ENCODE measurements at regions of chr5 and their contacts with region 1.

Region 1: DNA sequence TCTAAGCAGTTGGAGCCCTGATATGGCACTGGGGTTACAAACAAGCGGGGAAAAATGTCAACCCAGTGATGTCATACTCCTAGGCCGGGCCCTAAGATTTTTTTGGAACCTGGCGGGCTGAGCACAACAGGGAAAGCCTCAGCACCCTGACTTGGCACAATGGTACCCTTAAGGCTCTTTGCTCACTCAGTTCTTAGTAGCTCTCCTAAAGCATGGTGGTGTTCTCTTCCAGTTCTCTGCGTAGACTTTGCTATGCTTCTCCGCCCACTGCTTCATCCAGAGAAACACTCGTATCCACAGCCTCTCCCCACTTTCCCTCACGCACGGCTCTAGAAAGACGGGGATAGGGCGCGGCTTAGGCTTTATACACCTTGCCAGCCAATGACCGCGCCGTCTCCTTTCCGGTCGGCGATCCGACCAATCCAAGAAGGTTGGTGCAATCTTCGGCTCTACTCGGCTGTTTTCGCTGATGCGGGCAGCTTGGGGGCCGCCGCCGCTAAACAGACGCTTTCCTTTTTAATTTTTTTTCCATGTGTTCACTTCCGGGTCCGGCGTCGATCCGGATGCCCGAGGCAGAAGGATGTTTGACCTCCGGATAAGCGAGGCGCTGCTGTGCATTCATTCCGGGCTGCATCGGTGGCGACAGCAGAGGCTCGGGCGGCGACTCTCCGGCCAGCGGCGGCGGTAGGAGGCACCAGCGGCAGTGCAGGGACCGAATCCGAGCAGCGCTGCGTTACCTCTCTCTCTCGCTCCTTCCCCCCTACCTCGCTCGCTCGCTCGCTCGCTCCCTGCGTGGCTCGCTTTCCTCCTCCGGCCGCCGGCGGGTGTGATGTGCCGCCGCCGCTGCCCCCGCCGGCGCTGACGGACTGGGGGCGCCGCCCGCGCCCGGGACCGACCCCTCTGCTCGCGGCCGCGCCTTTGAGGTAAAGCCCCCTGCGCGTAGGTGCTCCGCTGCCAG is at the start of gene CSNK1G3:
- DNase-seq: peak; percentile 89
- H3K4me3 Mint-ChIP-seq: peak within 1 kb of the TSS; percentile 97
- H3K27ac Mint-ChIP-seq: peak within 1 kb of the TSS; percentile 99
- H3K4me1 Mint-ChIP-seq: peaks cover 53% of the 10 kb centered on the region
- H3K27me3 Mint-ChIP-seq: peaks cover 5% of the 10 kb centered on the region
- total RNA-seq, gene CSNK1G3: 39.6 and 45.8 TPM in 2 replicates

Region 2: GRCh38 chr5:122774861-122775549 is 736.9 kb before region 1 on chr5 and contains the start of gene SNX2:
- intact Hi-C with region 1: loop called (anchors 10 kb)
- DNase-seq: peak; percentile 79
- H3K4me3 Mint-ChIP-seq: peak within 1 kb of the TSS; percentile 95
- H3K27ac Mint-ChIP-seq: peak within 1 kb of the TSS; percentile 82
- H3K4me1 Mint-ChIP-seq: peaks cover 32% of the 10 kb centered on the region
- H3K27me3 Mint-ChIP-seq: peaks cover 4% of the 10 kb centered on the region
- total RNA-seq, gene SNX2: 30.5 and 35.0 TPM in 2 replicates

Region 3: DNA sequence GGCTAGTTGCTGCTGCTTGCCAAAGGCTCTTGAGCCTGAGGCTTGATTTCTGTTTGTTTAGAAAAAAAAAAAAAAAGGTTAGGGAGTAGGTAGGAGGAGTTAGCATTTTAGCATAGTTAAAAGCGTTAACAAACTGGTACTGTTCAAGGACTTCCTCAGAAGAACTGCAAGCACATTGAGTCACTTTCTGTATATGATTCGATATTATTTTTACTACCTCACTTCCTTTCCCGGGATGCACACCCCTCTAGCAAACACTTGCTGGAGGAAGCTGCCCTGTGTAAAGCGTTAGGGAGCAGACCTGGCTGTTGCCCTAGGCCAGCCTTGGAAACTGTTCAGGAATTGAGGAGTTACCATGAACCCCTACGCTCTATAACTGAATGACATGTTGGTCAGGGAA is 73.0 kb before region 1 on chr5:
- intact Hi-C with region 1: loop called (anchors 1 kb)
- DNase-seq: peak; percentile 29
- H3K4me3 Mint-ChIP-seq: peak overlapping the region; percentile 27
- H3K27ac Mint-ChIP-seq: peak overlapping the region; percentile 74
- H3K4me1 Mint-ChIP-seq: peaks cover 36% of the 10 kb centered on the region
- H3K27me3 Mint-ChIP-seq: no peaks in the 10 kb centered on the region

Region 4: DNA sequence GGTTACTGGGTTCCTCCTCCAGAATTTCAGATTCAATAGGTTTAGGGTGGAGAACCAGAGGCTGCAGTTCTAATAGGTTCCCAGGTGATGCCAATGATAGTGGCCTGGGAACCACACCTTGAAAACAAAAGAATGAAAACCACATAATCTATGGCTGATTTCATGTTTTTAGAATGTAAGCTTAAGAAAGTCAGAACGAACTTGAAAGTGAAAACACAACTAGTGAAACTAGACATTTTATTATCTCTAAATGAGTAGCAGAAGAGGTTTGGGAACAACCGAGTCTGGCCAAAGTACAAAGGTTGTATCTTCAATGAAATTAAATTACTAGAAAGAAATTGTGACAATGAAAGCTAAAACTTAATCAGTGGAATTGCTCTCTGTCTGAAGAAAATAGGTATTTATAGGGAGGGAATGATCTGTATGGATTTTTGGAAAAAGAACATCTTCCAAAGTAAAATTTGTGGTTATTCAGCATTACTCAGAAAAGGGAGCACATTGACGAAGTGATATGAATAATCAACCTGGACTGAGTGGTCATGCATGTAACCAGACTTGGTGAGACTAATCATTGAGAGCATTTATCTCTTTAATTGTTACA is 63.8 kb before region 1 on chr5:
- intact Hi-C with region 1: loop called (anchors 1 kb)
- DNase-seq: peak; percentile 37
- H3K4me3 Mint-ChIP-seq: peak overlapping the region; percentile 9
- H3K27ac Mint-ChIP-seq: peak overlapping the region; percentile 86
- H3K4me1 Mint-ChIP-seq: peaks cover 36% of the 10 kb centered on the region
- H3K27me3 Mint-ChIP-seq: peaks cover 9% of the 10 kb centered on the region

Region 5: GRCh38 chr5:123460296-123460729 is 51.6 kb before region 1 on chr5:
- intact Hi-C with region 1: loop called (anchors 1 kb)
- DNase-seq: no peak
- H3K4me3 Mint-ChIP-seq: peak overlapping the region; percentile 1
- H3K27ac Mint-ChIP-seq: peak overlapping the region; percentile 85
- H3K4me1 Mint-ChIP-seq: peaks cover 11% of the 10 kb centered on the region
- H3K27me3 Mint-ChIP-seq: no peaks in the 10 kb centered on the region

Region 6: GRCh38 chr5:123496892-123497291 is 15.0 kb before region 1 on chr5:
- intact Hi-C with region 1: no loop called
- DNase-seq: no peak
- H3K4me3 Mint-ChIP-seq: no peak overlapping the region
- H3K27ac Mint-ChIP-seq: no peak overlapping the region
- H3K4me1 Mint-ChIP-seq: no peaks in the 10 kb centered on the region
- H3K27me3 Mint-ChIP-seq: peaks cover 16% of the 10 kb centered on the region

Region 7: GRCh38 chr5:123549256-123549904 is 37.5 kb after region 1 on chr5:
- intact Hi-C with region 1: loop called (anchors 1 kb)
- DNase-seq: peak; percentile 70
- H3K4me3 Mint-ChIP-seq: peak overlapping the region; percentile 1
- H3K27ac Mint-ChIP-seq: peak overlapping the region; percentile 91
- H3K4me1 Mint-ChIP-seq: peaks cover 38% of the 10 kb centered on the region
- H3K27me3 Mint-ChIP-seq: no peaks in the 10 kb centered on the region

Region 8: DNA sequence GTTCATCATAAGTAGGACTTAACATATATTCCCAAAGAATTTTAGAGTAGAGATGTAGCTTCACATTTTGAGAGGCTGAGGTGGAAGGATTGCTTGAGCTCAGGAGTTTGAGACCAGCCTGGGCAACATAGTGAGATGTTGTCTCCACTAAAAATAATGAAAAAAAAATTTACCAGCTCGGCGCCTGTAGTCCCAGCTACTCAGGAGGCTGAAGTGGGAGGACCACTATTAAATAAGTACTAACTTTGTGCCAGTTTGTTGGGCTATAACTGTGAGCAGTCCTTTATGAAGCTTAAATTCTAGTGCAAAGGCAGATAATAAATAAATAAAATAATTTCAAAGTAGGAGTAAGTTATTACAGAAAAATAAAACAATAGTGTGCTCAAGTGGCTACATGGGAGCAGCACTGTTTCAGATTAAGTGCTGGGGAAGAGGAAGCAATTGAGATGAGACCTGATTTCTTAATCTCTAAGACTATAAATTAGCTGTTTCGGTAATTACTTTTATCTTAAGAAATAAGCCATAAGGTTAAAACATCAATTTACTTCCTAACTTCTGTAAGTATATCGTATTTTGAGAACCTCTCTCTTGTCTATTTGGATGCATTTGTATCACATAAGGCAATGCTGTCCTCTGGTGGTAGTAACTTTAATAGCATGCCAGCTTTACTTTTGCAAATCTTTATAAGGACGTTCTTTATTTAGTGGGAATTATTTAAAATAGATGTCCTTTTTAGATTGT is 98.9 kb after region 1 on chr5:
- intact Hi-C with region 1: loop called (anchors 2 kb)
- DNase-seq: peak; percentile 11
- H3K4me3 Mint-ChIP-seq: no peak overlapping the region
- H3K27ac Mint-ChIP-seq: no peak overlapping the region
- H3K4me1 Mint-ChIP-seq: peaks cover 12% of the 10 kb centered on the region
- H3K27me3 Mint-ChIP-seq: no peaks in the 10 kb centered on the region